ENCODE measurements at regions of chr11 and their contacts with region 1.

Region 1: GRCh38 chr11:86818466-86819192 is 18.3 kb downstream of the PRSS23 start:
- DNase-seq: no peak
- ATAC-seq: peak in 3 of 4 donors; percentile 24 to 45 (median 43)
- H3K4me3 ChIP-seq: no peak overlapping the region
- H3K27ac ChIP-seq: peak overlapping the region in 1 of 12 donors; percentile 80
- H3K4me1 ChIP-seq: peaks cover 0 to 43% (median 14%) of the 10 kb centered on the region in 12 donors
- H3K27me3 ChIP-seq: no peaks in the 10 kb centered on the region
- CTCF ChIP-seq: peak; percentile 65 to 88 (median 82)
- POLR2A ChIP-seq: no peak

Region 2: GRCh38 chr11:85941380-85941973 is 877.2 kb before region 1 on chr11:
- intact Hi-C with region 1: loop called in 1 of 10 experiments (anchors 10 kb)
- DNase-seq: peak in 2 of 5 donors; percentile 51 to 63
- ATAC-seq: peak in 3 of 4 donors; percentile 79 to 85 (median 83)
- H3K4me3 ChIP-seq: no peak overlapping the region
- H3K27ac ChIP-seq: no peak overlapping the region
- H3K4me1 ChIP-seq: peaks cover 0 to 19% (median 7%) of the 10 kb centered on the region in 12 donors
- H3K27me3 ChIP-seq: no peaks in the 10 kb centered on the region
- CTCF ChIP-seq: peak; percentile 63 to 85 (median 78)
- POLR2A ChIP-seq: no peak

Region 3: GRCh38 chr11:86355256-86355655 is 463.4 kb before region 1 on chr11:
- intact Hi-C with region 1: loop called in 2 of 10 experiments (anchors 10 kb)
- DNase-seq: no peak
- ATAC-seq: no peak
- H3K4me3 ChIP-seq: no peak overlapping the region
- H3K27ac ChIP-seq: no peak overlapping the region
- H3K4me1 ChIP-seq: no peaks in the 10 kb centered on the region
- H3K27me3 ChIP-seq: no peaks in the 10 kb centered on the region
- CTCF ChIP-seq: no peak
- POLR2A ChIP-seq: no peak

Region 4: DNA sequence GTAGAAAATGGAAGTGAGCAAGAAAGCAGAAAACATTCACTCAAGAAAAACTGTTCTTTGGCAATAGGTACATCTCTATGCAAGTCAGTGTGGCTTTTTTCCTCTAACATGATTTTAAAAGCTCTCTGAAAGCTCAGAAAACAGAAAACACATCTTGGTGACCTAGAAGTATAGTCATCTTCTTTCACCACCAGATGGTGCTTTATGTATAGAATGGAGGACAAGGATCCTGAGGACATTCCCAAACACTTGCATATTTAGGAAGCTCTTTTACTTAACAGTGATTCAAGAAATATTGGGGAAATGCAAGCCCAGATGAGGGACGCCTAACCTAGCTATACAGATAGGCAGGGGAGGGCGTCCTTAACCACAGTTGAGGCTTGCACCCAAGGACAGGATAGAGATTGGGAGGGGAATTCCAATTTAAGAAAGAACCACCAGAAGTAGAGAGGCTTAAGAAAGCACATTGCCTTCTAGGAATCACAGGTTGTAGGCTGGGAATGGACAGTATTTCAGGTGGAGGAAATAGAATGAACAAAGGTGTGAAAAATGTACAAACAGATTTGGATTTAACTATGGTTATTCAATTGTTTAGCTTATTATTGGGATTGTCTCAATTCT is 457.7 kb before region 1 on chr11:
- intact Hi-C with region 1: loop called in 2 of 10 experiments (anchors 10 kb)
- DNase-seq: no peak
- ATAC-seq: no peak
- H3K4me3 ChIP-seq: no peak overlapping the region
- H3K27ac ChIP-seq: no peak overlapping the region
- H3K4me1 ChIP-seq: no peaks in the 10 kb centered on the region
- H3K27me3 ChIP-seq: no peaks in the 10 kb centered on the region
- CTCF ChIP-seq: peak in 2 of 12 donors; percentile 27 to 30
- POLR2A ChIP-seq: no peak

Region 5: GRCh38 chr11:86456052-86456939 is 362.3 kb before region 1 on chr11:
- intact Hi-C with region 1: loop called (anchors 1 to 2 kb)
- DNase-seq: peak; percentile 82 to 86 (median 85)
- ATAC-seq: peak; percentile 47 to 83 (median 78)
- H3K4me3 ChIP-seq: no peak overlapping the region
- H3K27ac ChIP-seq: peak overlapping the region in 6 of 12 donors; percentile 20 to 61 (median 39)
- H3K4me1 ChIP-seq: peaks cover 3 to 55% (median 37%) of the 10 kb centered on the region in 12 donors
- H3K27me3 ChIP-seq: no peaks in the 10 kb centered on the region
- CTCF ChIP-seq: peak; percentile 83 to 97 (median 91)
- POLR2A ChIP-seq: no peak

Region 6: DNA sequence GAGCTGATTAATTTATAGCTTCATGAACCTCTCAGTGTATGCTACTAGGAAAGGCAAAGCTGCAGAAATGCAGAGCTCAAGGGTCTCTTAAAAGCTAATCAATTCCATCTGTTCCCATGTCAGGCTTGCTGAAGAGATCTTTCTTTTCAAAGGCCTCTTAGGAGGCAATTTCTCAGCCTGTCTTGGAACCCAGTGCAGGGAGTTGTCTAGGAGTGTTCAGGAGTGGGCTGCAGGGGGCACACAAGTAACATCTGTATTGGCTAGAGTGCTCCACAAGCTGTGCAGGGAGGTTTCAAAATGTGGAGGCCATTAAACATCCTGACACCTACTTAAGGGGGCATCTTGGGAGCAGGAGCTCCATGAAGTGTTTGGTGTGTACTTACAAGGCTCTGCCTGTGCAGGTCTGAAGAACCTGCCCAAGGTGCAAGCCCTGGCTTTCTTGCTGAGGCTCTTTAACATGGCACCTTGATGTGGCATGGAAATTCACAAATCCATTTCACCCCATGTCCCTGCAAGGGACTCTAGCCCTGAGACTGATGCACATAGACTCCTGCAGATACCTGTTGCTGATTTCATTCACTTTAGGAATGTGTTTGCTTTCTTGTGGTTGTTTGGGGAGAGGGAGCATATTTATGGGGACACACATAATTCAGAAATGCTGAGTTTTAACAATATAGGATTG is 280.9 kb before region 1 on chr11:
- intact Hi-C with region 1: loop called in 1 of 10 experiments (anchors 10 kb)
- DNase-seq: no peak
- ATAC-seq: peak in 2 of 4 donors; percentile 24 to 49
- H3K4me3 ChIP-seq: no peak overlapping the region
- H3K27ac ChIP-seq: no peak overlapping the region
- H3K4me1 ChIP-seq: no peaks in the 10 kb centered on the region
- H3K27me3 ChIP-seq: no peaks in the 10 kb centered on the region
- CTCF ChIP-seq: peak in 4 of 12 donors; percentile 10 to 33 (median 21)
- POLR2A ChIP-seq: no peak

Region 7: GRCh38 chr11:86608251-86608799 is 210.3 kb before region 1 on chr11:
- intact Hi-C with region 1: loop called (anchors 2 to 5 kb)
- DNase-seq: peak; percentile 58 to 76 (median 75)
- ATAC-seq: peak; percentile 43 to 88 (median 83)
- H3K4me3 ChIP-seq: peak overlapping the region in 3 of 12 donors; percentile 8 to 16 (median 8)
- H3K27ac ChIP-seq: peak overlapping the region in 4 of 12 donors; percentile 1 to 39 (median 8)
- H3K4me1 ChIP-seq: peaks cover 0 to 43% (median 22%) of the 10 kb centered on the region in 12 donors
- H3K27me3 ChIP-seq: no peaks in the 10 kb centered on the region
- CTCF ChIP-seq: peak; percentile 86 to 98 (median 95)
- POLR2A ChIP-seq: no peak